Naive thymus-derived CD4-positive, alpha-beta T cell (primary cell): ENCODE measurements at regions of chrX and their contacts with region 1.

Region 1: GRCh38 chrX:17632942-17633341 is 104.4 kb upstream of the SCML1 start:
- DNase-seq: no peak
- ATAC-seq: no peak
- H3K4me3 ChIP-seq: no peak overlapping the region
- H3K4me3 Mint-ChIP-seq: peak overlapping the region in 3 of 10 donors; percentile 14 to 69 (median 57)
- H3K27ac ChIP-seq: no peak overlapping the region
- H3K27ac Mint-ChIP-seq: peak overlapping the region in 4 of 9 donors; percentile 46 to 82 (median 64)
- H3K4me1 ChIP-seq: peaks cover 0 to 5% of the 10 kb centered on the region in 2 donors
- H3K4me1 Mint-ChIP-seq: peaks cover 0 to 9% (median 6%) of the 10 kb centered on the region in 7 donors
- H3K27me3 ChIP-seq: no peaks in the 10 kb centered on the region
- H3K27me3 Mint-ChIP-seq: no peaks in the 10 kb centered on the region

Region 2: GRCh38 chrX:17655211-17656034 is 22.5 kb after region 1 on chrX:
- CTCF ChIA-PET with region 1: no interaction called
- POLR2A ChIA-PET with region 1: no interaction called
- intact Hi-C with region 1: loop called in 1 of 2 experiments (anchors 2 kb)
- DNase-seq: peak in 3 of 9 donors; percentile 4 to 24 (median 8)
- ATAC-seq: peak; percentile 40
- H3K4me3 ChIP-seq: peak overlapping the region; percentile 30
- H3K4me3 Mint-ChIP-seq: peak overlapping the region; percentile 74 to 92 (median 88)
- H3K27ac ChIP-seq: no peak overlapping the region
- H3K27ac Mint-ChIP-seq: peak overlapping the region in 6 of 9 donors; percentile 4 to 89 (median 46)
- H3K4me1 ChIP-seq: peaks cover 7 to 20% of the 10 kb centered on the region in 2 donors
- H3K4me1 Mint-ChIP-seq: peaks cover 8 to 32% (median 29%) of the 10 kb centered on the region in 7 donors
- H3K27me3 ChIP-seq: no peaks in the 10 kb centered on the region
- H3K27me3 Mint-ChIP-seq: no peaks in the 10 kb centered on the region